ENCODE measurements at regions of chr7 and their contacts with region 1.

Region 1: GRCh38 chr7:103524042-103524907 is 78.3 kb upstream of the SLC26A5 start:
- DNase-seq: no peak
- H3K4me3 ChIP-seq: no peak overlapping the region
- H3K27ac ChIP-seq: no peak overlapping the region
- H3K4me1 ChIP-seq: peaks cover 0 to 3% (median 0%) of the 10 kb centered on the region in 4 donors
- H3K27me3 ChIP-seq: peaks cover 0 to 3% of the 10 kb centered on the region in 2 donors
- CTCF ChIP-seq: peak; percentile 42 to 44

Region 2: DNA sequence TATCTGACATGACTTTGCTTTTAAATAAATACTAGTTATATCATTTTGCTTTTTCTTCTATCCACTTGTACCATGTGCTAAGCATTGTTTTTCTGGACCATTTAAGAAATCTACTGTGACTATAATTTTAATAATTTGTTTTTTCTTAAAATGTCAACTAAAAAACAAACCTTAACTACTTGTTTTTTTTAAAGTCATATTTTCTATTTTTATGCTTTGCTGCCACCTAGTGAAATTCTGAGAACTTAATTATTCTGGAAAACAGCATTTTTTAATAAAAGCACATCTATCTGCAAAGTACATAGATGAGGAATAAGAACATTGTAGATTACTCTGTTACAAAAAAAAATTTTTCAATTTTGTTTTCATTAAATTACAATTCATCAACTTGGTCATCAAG is 636.1 kb after region 1 on chr7:
- intact Hi-C with region 1: loop called (anchors 10 kb)
- DNase-seq: no peak
- H3K4me3 ChIP-seq: no peak overlapping the region
- H3K27ac ChIP-seq: no peak overlapping the region
- H3K4me1 ChIP-seq: no peaks in the 10 kb centered on the region
- H3K27me3 ChIP-seq: no peaks in the 10 kb centered on the region
- CTCF ChIP-seq: peak; percentile 15 to 23